ENCODE measurements at regions of chr13 and their contacts with region 1.

Region 1: GRCh38 chr13:105991622-105992277 is 543.7 kb downstream of the EFNB2 start:
- DNase-seq: peak; percentile 99
- H3K4me3 Mint-ChIP-seq: peak overlapping the region; percentile 49
- H3K27ac Mint-ChIP-seq: peak overlapping the region; percentile 100
- H3K4me1 Mint-ChIP-seq: peaks cover 35% of the 10 kb centered on the region
- H3K27me3 Mint-ChIP-seq: no peaks in the 10 kb centered on the region
- CTCF ChIP-seq: no peak

Region 2: GRCh38 chr13:105773863-105774538 is 217.7 kb before region 1 on chr13:
- CTCF ChIA-PET with region 1: no interaction called
- POLR2A ChIA-PET with region 1: no interaction called
- intact Hi-C with region 1: no loop called
- DNase-seq: peak; percentile 44
- H3K4me3 Mint-ChIP-seq: peak overlapping the region; percentile 12
- H3K27ac Mint-ChIP-seq: no peak overlapping the region
- H3K4me1 Mint-ChIP-seq: peaks cover 17% of the 10 kb centered on the region
- H3K27me3 Mint-ChIP-seq: no peaks in the 10 kb centered on the region
- CTCF ChIP-seq: no peak

Region 3: GRCh38 chr13:105918842-105919741 is 72.7 kb before region 1 on chr13:
- CTCF ChIA-PET with region 1: no interaction called
- POLR2A ChIA-PET with region 1: interaction called, 4 read pairs
- intact Hi-C with region 1: loop called (anchors 1 kb)
- DNase-seq: peak; percentile 83
- H3K4me3 Mint-ChIP-seq: peak overlapping the region; percentile 68
- H3K27ac Mint-ChIP-seq: peak overlapping the region; percentile 17
- H3K4me1 Mint-ChIP-seq: peaks cover 32% of the 10 kb centered on the region
- H3K27me3 Mint-ChIP-seq: no peaks in the 10 kb centered on the region
- CTCF ChIP-seq: no peak

Region 4: GRCh38 chr13:105979131-105980011 is 12.4 kb before region 1 on chr13:
- CTCF ChIA-PET with region 1: interaction called, 6 read pairs
- POLR2A ChIA-PET with region 1: interaction called, 20 read pairs
- intact Hi-C with region 1: no loop called
- DNase-seq: peak; percentile 60
- H3K4me3 Mint-ChIP-seq: peak overlapping the region; percentile 15
- H3K27ac Mint-ChIP-seq: peak overlapping the region; percentile 65
- H3K4me1 Mint-ChIP-seq: peaks cover 14% of the 10 kb centered on the region
- H3K27me3 Mint-ChIP-seq: no peaks in the 10 kb centered on the region
- CTCF ChIP-seq: no peak

Region 5: GRCh38 chr13:106513025-106513983 is 521.6 kb after region 1 on chr13:
- CTCF ChIA-PET with region 1: no interaction called
- POLR2A ChIA-PET with region 1: interaction called, 7 read pairs
- intact Hi-C with region 1: loop called (anchors 5 kb)
- DNase-seq: peak; percentile 78
- H3K4me3 Mint-ChIP-seq: peak overlapping the region; percentile 45
- H3K27ac Mint-ChIP-seq: peak overlapping the region; percentile 96
- H3K4me1 Mint-ChIP-seq: peaks cover 32% of the 10 kb centered on the region
- H3K27me3 Mint-ChIP-seq: no peaks in the 10 kb centered on the region
- CTCF ChIP-seq: no peak